ENCODE measurements at regions of chr1 and their contacts with region 1.

Region 1: GRCh38 chr1:35079003-35079930 is at the start of gene ZMYM1:
- DNase-seq: peak; percentile 81 to 93 (median 89)
- ATAC-seq: peak; percentile 93 to 99 (median 98)
- H3K4me3 ChIP-seq: peak within 1 kb of the TSS; percentile 52 to 92 (median 74)
- H3K27ac ChIP-seq: peak within 1 kb of the TSS; percentile 33 to 94 (median 86)
- H3K4me1 ChIP-seq: peaks cover 0 to 20% (median 9%) of the 10 kb centered on the region in 12 donors
- H3K27me3 ChIP-seq: no peaks in the 10 kb centered on the region
- CTCF ChIP-seq: no peak
- POLR2A ChIP-seq: peak in 1 of 2 donors; percentile 67
- total RNA-seq, gene ZMYM1: 3.8 to 9.7 (median 7.4) TPM

Region 2: GRCh38 chr1:35001743-35002142 is 77.5 kb before region 1 on chr1:
- intact Hi-C with region 1: loop called in 1 of 10 experiments (anchors 10 kb)
- DNase-seq: no peak
- ATAC-seq: no peak
- H3K4me3 ChIP-seq: no peak overlapping the region
- H3K27ac ChIP-seq: no peak overlapping the region
- H3K4me1 ChIP-seq: no peaks in the 10 kb centered on the region
- H3K27me3 ChIP-seq: no peaks in the 10 kb centered on the region
- CTCF ChIP-seq: no peak
- POLR2A ChIP-seq: no peak

Region 3: GRCh38 chr1:35030756-35031446 is 48.4 kb before region 1 on chr1:
- intact Hi-C with region 1: loop called in 3 of 10 experiments (anchors 1 to 5 kb)
- DNase-seq: peak in 2 of 5 donors; percentile 11 to 27
- ATAC-seq: peak in 3 of 4 donors; percentile 33 to 44 (median 43)
- H3K4me3 ChIP-seq: peak overlapping the region; percentile 60 to 95 (median 73)
- H3K27ac ChIP-seq: peak overlapping the region; percentile 81 to 96 (median 93)
- H3K4me1 ChIP-seq: peaks cover 0 to 28% (median 15%) of the 10 kb centered on the region in 12 donors
- H3K27me3 ChIP-seq: no peaks in the 10 kb centered on the region
- CTCF ChIP-seq: no peak
- POLR2A ChIP-seq: no peak

Measured in heart left ventricle (tissue), 16 donors.